ENCODE measurements at regions of chr1 and their contacts with region 1.

Region 1: DNA sequence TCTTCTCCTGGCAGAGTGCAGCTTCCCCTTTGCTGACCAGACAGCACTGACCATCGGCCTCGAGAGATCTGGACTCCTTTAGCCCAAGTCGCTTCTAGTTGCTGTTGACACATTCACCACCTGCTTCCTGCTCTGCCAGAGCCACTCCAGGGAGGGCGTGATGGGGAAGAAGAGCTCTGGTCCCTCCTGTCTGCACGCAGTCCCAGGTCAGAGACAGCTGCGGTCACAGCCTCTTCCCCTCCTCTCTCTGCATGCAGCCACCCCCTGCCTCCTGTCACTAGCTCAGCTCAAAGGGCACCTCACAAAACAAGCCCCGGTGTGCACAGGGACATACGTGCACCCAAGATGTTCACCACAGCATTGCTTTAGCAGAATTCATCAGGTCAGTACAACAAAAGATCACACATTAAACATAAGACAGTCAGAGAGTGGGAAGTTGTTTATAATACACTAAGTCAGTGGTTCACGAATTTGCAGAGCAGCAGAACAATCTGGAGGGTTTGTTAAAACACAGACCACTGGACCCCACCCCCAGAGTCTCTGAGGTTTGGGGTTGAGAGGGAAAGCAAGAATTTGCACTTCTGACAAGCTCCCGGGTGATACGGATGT is 132.9 kb downstream of the SYF2 start:
- DNase-seq: no peak
- H3K4me3 ChIP-seq: no peak overlapping the region
- H3K27me3 ChIP-seq: peaks cover 14% of the 10 kb centered on the region
- CTCF ChIP-seq: no peak

Region 2: DNA sequence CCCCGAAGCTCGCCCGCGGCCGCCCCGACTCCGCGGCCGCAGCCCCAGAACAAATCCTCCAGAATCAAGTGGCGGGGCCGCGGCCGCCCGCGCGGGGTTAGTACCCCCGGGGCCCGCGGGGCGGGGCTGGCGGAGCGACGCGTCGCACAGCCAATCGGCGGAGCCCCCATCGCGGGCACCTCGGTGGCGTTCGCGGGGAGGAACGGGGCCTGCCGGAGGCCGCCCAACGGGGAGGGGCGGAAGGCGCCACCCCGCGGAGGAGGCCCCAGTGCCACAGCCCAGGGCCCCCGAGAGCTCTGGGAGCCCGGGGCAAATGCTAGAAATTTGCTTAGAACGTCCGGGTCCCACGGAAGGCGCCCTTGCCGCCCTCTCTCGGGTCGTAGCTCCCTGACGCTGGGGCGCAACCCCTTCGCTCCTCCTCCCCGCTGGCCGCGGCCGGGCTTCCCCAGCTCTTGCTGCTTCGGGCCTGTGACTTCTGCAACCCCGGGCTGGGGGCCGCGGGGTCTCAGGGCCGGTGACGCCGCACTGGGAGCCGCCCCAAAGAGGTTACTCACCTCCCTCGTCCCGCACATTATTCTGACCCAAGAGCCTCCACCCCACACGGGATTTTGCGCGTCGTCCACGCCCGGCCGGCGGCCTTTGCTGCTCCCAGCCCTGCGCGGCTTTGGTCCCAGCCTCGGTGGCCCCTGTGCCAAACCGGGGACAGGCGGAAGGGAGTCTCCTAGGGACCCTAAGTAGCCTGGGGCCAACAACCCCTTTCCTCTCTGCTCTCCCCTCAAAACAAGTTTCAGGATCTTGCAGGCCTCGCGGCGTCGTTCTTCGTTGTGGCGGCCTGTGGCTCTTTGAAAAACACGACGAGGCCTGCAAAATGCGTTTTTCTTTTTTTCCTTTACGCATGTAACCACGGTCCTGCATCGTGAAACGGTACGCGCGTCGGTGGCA is 169.0 kb before region 1 on chr1 and contains the start of gene RUNX3:
- CTCF ChIA-PET with region 1: interaction called, 25 read pairs
- POLR2A ChIA-PET with region 1: no interaction called
- DNase-seq: no peak
- H3K4me3 ChIP-seq: peak within 1 kb of the TSS; percentile 44
- H3K27me3 ChIP-seq: peaks cover 52% of the 10 kb centered on the region
- CTCF ChIP-seq: no peak
- polyA plus RNA-seq, gene RUNX3: 0.23 and 0.54 TPM in 2 replicates

Region 3: DNA sequence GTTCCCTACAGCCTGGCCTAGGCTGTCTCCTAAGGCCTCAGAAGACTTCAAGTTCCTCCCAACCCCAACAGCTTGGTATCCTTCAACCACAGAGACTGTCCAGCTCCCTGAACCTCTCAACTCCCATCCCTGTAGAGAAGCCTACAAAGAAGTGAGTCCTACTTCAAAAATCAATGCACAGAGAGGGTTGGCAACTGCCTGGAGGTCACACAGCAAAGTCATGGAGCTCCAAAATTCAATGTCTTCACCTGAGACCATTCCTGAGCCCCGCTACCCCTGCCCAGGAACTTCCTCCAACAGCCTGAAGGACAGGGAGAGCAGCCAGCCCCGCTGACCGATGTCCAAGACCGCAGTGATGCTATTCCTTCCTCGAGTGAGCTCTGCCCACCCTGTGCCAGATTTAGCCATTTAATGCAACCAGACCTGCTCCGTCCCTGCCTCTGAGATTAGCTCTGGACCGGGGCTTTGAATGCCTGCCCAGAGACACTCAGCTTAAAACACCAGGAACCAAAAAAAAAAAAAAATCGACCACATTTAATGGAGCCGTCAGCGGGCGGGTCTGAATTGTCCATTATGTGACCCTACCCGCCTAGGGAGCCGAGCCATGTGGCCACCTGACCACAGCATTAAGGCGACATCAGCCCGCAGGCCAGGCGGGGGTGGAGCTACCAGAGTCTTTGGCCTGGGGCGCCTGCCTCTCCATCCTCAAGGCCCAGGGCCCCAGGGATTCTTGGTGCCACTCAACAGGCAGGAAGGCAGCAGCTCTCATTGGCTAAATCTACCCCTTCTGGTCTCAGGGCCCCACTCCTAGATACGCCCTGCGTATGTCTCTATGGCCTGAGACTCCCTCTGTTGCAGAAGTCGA is 15.7 kb before region 1 on chr1:
- CTCF ChIA-PET with region 1: interaction called, 12 read pairs
- POLR2A ChIA-PET with region 1: no interaction called
- DNase-seq: no peak
- H3K4me3 ChIP-seq: no peak overlapping the region
- H3K27me3 ChIP-seq: peaks cover 9% of the 10 kb centered on the region
- CTCF ChIP-seq: no peak

Measured in BJ (cell line).